Activated CD4-positive, alpha-beta T cell treated with anti-CD3 and anti-CD28 coated beads for 36 hours (primary cell): ENCODE measurements at regions of chr22 and their contacts with region 1.

Region 1: GRCh38 chr22:41621099-41621910 is at the start of gene XRCC6:
- DNase-seq: peak; percentile 100
- ATAC-seq: peak; percentile 91
- H3K4me3 Mint-ChIP-seq: peak within 1 kb of the TSS; percentile 98
- H3K27ac Mint-ChIP-seq: peak within 1 kb of the TSS; percentile 99
- H3K4me1 Mint-ChIP-seq: peaks cover 48% of the 10 kb centered on the region
- H3K27me3 Mint-ChIP-seq: no peaks in the 10 kb centered on the region
- total RNA-seq, gene XRCC6: 427 to 469 TPM

Region 2: DNA sequence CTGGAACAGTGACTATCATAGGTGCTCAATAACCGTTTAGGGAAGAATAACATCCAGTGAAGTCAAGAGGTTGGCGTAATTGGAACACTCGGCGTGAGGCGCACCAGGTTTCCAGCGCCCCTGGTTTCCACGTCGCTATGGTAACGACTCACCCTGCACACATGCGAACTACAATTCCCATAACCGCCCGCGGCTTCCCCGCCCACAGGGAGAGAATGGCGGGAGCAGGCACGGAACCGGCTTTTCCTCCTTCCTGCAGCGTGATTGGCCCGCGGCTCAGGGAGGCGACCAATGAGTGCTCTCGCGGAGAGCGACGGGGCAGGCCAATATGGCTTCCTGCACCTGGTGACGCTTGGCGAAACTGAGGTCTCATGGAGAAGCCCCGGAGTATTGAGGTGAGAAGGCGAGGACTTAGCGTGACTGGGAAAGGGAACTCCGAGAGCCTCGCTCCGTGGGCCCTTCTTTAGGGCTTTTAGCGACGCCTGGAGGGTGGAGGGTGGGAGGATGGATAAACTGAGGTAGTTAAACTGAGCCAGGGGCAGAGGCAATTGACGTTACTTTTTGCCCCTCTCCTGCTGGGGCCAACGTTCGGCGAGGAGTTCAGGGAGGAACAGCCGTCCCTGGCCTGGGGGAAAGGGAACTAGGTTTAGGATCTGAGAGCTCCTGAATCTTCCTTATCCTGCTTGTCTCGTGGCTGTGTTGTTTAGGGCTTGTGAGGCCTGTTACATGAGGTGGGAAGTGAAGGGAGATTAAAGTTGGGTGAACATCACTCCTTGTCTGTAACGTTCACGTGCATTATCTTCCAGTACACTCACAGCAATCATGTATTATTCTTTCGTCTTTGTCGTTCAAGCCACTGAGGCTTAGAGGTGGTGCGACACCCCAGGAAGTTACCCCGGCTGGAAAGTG is 416.1 kb before region 1 on chr22 and contains the start of gene L3MBTL2:
- CTCF ChIA-PET with region 1: no interaction called
- POLR2A ChIA-PET with region 1: no interaction called
- intact Hi-C with region 1: loop called in 1 of 2 experiments (anchors 1 kb)
- DNase-seq: peak; percentile 100
- ATAC-seq: peak; percentile 100
- H3K4me3 Mint-ChIP-seq: peak within 1 kb of the TSS; percentile 86
- H3K27ac Mint-ChIP-seq: peak within 1 kb of the TSS; percentile 89
- H3K4me1 Mint-ChIP-seq: peaks cover 20% of the 10 kb centered on the region
- H3K27me3 Mint-ChIP-seq: peaks cover 10% of the 10 kb centered on the region
- total RNA-seq, gene L3MBTL2: 24.4 to 25.1 TPM

Region 3: DNA sequence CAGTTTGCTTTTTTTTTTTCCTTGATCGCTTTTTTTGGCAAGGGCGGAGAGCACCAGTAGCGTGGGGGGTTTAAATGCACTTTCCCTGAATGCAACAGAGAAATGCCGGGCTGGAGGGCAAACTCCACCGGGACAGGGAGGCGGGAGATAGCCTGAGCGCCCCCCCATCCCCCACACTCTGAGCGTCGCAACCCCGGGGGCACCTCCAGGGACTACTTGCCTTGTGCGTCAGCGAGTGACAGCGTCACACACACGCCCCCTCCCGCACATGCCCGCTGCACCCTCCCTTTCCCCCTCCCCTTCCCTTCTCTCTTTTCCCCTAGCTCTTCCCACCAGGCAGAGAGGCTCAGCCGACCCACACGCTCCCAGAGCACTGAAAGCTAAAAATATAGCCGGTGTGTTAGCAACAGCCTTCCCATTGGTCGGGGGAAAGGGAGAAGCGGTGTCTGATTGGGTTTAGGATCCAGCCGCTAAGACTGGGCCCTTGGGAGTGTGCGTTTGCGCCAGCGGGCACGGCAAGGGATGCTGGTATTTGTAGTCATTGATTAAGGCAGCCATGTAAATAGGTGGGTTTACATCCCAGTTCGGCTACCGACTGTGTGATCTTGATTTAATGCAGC is 173.0 kb before region 1 on chr22:
- CTCF ChIA-PET with region 1: no interaction called
- POLR2A ChIA-PET with region 1: interaction called, 6 read pairs
- intact Hi-C with region 1: loop called (anchors 1 to 10 kb)
- DNase-seq: peak; percentile 95
- ATAC-seq: peak; percentile 73
- H3K4me3 Mint-ChIP-seq: peak overlapping the region; percentile 86
- H3K27ac Mint-ChIP-seq: peak overlapping the region; percentile 97
- H3K4me1 Mint-ChIP-seq: peaks cover 8% of the 10 kb centered on the region
- H3K27me3 Mint-ChIP-seq: no peaks in the 10 kb centered on the region

Region 4: DNA sequence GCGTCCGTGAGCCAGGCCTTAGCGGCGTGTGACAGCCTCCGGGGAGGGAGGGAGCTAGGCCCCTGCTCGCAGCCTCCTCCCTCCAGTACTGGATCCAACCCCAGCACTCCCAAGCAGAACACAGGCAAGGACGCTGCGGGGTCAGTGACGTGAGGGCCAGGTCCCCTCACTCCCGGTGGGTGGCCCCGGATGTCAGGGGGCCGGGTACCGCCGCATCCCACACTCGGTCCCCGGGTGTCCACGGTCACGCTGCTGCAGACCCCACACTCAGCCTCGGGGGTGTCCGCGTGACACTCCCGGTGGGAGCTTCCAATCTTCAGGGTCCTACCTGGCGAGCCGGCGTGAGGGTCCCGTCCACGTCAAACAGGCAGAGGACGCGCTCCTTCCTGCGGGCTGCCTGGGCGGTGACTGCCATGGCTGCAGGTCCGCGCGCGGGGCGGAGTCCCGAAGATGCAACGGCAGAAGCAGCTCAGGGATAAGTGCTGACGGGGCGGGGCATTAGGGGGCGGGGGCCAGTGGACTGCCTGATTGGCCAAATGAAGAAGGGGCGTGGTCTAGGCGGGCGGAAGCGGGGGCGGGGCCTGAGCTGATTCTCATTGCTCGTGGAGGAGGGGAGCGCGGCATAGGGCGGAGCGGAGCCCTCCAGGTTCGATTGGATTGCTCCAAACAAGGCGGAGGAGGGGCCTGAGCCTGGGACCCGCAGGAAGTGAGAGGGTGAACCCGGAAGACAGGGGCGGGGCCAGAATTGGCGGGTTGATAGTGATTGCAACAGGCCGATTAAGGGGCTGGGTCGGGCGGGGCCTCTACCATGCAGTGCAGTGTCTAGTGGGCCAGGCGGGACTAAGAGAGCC is 31.7 kb before region 1 on chr22 and contains the start of gene PMM1:
- CTCF ChIA-PET with region 1: interaction called, 4 read pairs
- POLR2A ChIA-PET with region 1: interaction called, 25 read pairs
- intact Hi-C with region 1: loop called (anchors 1 kb)
- DNase-seq: peak; percentile 100
- ATAC-seq: peak; percentile 99
- H3K4me3 Mint-ChIP-seq: peak within 1 kb of the TSS; percentile 88
- H3K27ac Mint-ChIP-seq: peak within 1 kb of the TSS; percentile 85
- H3K4me1 Mint-ChIP-seq: peaks cover 15% of the 10 kb centered on the region
- H3K27me3 Mint-ChIP-seq: no peaks in the 10 kb centered on the region
- total RNA-seq, gene PMM1: 30.4 to 37.4 TPM

Region 5: GRCh38 chr22:41688365-41689211 is 67.3 kb after region 1 on chr22 and contains the start of gene SNU13:
- CTCF ChIA-PET with region 1: interaction called, 3 read pairs
- POLR2A ChIA-PET with region 1: interaction called, 4 read pairs
- intact Hi-C with region 1: loop called (anchors 1 to 2 kb)
- DNase-seq: peak; percentile 96
- ATAC-seq: peak; percentile 93
- H3K4me3 Mint-ChIP-seq: peak within 1 kb of the TSS; percentile 98
- H3K27ac Mint-ChIP-seq: peak within 1 kb of the TSS; percentile 98
- H3K4me1 Mint-ChIP-seq: peaks cover 34% of the 10 kb centered on the region
- H3K27me3 Mint-ChIP-seq: no peaks in the 10 kb centered on the region
- total RNA-seq, gene SNU13: 275 to 281 TPM

Region 6: DNA sequence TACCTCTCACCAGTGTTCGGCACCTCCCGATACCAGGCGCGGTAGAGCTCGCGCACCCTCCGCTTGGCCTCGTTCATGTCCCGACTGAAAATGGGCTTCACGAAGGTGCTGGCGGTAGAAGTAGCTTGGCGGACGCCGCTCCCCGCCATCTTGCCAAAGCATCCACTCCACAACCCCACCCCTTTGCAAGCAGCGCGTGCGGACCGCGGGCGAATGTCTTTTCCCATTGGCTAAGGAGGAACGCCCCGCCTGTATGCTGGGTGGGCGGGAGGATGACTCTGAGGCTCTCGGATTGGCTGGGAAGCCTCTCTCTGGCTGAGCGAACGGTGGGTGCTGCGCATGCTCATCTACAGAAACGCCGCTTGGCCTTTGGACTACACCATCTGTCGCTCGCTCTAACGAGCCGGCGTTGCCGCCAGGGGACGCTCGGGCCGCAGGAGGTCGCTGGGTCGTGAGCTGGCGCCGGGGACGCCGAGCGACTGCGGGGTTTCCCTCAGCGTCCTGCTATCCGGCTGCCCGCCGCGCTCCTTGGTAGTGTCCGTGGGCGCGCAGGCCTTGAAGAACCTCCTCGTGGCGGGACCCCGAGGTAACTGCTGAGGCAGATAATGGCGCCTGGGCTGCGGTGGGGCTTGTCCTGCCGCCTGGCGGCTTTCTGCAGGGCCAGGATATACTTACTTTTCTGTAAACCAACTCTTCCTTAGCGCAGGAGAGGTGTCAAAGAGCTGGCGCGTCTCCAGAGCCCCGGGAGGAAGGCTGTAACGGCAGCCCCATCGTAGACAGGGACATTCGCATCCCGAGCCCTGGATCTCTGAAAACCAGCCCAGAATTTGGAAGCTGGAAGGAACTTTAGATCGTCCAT is 469.5 kb after region 1 on chr22 and contains the start of gene NDUFA6:
- CTCF ChIA-PET with region 1: no interaction called
- POLR2A ChIA-PET with region 1: no interaction called
- intact Hi-C with region 1: loop called in 1 of 2 experiments (anchors 2 kb)
- DNase-seq: peak; percentile 99
- ATAC-seq: peak; percentile 97
- H3K4me3 Mint-ChIP-seq: peak within 1 kb of the TSS; percentile 96
- H3K27ac Mint-ChIP-seq: peak within 1 kb of the TSS; percentile 99
- H3K4me1 Mint-ChIP-seq: peaks cover 30% of the 10 kb centered on the region
- H3K27me3 Mint-ChIP-seq: no peaks in the 10 kb centered on the region
- total RNA-seq, gene NDUFA6: 123 to 144 TPM